GM10248 (cell line): ENCODE measurements at regions of chr17 and their contacts with region 1.

Region 1: DNA sequence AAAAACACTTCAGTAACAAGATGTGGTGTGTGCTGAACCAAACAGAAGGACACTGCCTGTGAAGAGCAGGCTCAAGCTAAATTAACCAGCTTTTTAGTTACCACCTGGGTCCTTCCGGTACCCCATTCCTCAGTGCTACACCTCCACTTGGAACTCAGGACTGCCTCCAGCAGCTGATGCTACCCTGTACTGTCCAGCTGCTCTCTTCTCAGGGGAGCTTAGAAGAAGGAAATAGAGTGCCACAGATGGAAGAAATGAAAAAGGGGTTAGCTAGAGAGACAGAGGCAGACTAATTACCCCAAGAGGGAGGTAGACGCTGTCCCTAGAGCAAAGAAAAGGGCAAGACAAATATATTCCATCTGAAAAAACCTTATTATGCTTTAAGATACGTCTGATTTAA is 5.7 kb downstream of the MED13 start:
- DNase-seq: no peak
- CTCF ChIP-seq: no peak

Region 2: GRCh38 chr17:62045109-62045905 is 14.1 kb before region 1 on chr17:
- CTCF ChIA-PET with region 1: interaction called, 10 read pairs
- POLR2A ChIA-PET with region 1: interaction called, 3 read pairs
- DNase-seq: no peak
- CTCF ChIP-seq: no peak